Pancreas (tissue), 10 donors: ENCODE measurements at regions of chr2 and their contacts with region 1.

Region 1: GRCh38 chr2:176126929-176127773 is 2.4 kb upstream of the HOXD8 start:
- DNase-seq: peak in 5 of 6 donors; percentile 30 to 82 (median 66)
- ATAC-seq: peak in 3 of 4 donors; percentile 50 to 63 (median 60)
- H3K4me3 ChIP-seq: no peak overlapping the region
- H3K27ac ChIP-seq: no peak overlapping the region
- H3K4me1 ChIP-seq: peaks cover 0 to 10% (median 2%) of the 10 kb centered on the region in 3 donors
- H3K27me3 ChIP-seq: peaks cover 6 to 82% (median 37%) of the 10 kb centered on the region in 4 donors
- CTCF ChIP-seq: peak; percentile 63 to 86 (median 76)

Region 2: GRCh38 chr2:176193048-176193447 is 65.9 kb after region 1 on chr2:
- intact Hi-C with region 1: no loop called
- DNase-seq: no peak
- ATAC-seq: no peak
- H3K4me3 ChIP-seq: no peak overlapping the region
- H3K27ac ChIP-seq: no peak overlapping the region
- H3K4me1 ChIP-seq: peaks cover 3 to 15% (median 7%) of the 10 kb centered on the region in 3 donors
- H3K27me3 ChIP-seq: peaks cover 0 to 29% (median 15%) of the 10 kb centered on the region in 4 donors
- CTCF ChIP-seq: no peak

Region 3: DNA sequence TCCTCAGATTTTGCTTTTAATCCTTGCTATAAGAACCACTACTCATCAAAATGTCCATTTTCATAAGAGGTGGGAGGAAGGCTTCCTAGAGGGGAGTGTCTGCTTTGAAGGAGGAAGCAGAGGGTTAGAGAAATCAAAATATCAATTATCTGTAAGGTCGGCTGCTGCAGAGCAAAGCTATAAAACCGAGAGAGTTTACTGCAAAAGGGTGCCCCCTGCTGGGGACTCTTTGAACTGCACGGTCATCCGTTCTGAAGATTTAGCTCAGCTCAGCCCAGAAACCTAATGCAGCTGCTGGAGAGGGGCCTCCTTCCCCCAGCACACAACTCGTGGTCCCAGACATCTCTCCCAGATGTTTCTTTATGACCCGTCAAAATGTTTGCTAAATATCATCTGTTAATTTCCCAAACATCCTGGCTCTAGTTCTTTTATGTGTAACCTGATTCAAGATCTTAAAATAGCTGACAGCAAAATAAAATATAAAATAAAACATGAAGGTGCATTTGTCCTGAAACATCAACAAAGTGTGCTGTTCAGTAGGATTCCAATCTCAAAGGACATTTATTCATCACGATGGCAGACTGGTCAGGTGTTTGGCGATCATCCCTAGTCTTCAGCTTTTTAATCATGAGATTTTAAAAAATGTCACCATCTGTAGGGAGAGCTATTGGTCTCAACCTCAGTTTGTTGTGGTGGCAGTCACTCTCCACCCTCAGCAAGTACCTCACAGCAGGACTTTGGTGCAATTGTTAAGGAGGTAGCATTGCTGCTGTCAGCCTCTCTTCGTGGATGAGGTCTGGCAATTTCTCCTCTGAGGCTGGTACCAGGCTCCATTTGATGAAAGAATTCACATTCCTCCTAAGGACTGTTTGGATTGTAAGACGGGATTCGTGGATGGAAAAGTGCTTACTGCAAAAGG is 328.0 kb after region 1 on chr2:
- intact Hi-C with region 1: loop called in 1 of 3 experiments (anchors 10 kb)
- DNase-seq: peak; percentile 52 to 97 (median 80)
- ATAC-seq: peak; percentile 24 to 94 (median 86)
- H3K4me3 ChIP-seq: no peak overlapping the region
- H3K27ac ChIP-seq: no peak overlapping the region
- H3K4me1 ChIP-seq: no peaks in the 10 kb centered on the region
- H3K27me3 ChIP-seq: peaks cover 0 to 7% (median 2%) of the 10 kb centered on the region in 4 donors
- CTCF ChIP-seq: peak; percentile 85 to 97 (median 90)

Region 4: DNA sequence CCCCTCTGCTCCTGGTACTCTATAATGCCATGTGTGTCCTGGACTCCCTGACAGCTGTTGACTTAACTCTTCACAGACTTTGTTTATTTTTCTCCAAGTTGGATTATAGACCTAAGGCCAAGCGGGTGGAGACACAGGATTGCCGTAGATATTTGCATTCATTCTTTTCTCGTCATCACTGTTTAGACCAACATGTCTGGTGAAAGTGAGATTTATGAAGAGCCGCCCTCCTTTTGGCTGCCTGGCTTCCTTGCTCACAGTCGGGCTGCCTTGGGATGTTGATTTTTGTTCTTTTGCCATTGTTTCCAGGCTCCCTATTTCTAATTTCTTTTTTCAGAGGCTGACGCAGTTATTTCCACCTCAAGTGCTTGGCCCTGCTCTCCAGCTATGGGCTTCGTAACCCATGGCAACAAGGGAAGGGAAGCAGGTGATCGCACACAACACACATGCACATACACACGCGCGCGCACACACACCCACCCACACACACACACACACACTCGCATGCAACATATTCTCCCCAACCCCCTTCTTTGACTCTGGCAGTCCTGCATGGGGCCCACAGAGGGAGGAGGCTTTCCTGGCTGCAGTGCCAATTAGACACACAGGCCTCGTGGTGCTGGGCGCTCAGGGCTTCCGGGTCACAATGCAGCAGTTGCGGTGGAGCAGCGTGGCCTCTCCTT is 438.6 kb after region 1 on chr2:
- intact Hi-C with region 1: loop called in 1 of 3 experiments (anchors 10 kb)
- DNase-seq: no peak
- ATAC-seq: no peak
- H3K4me3 ChIP-seq: no peak overlapping the region
- H3K27ac ChIP-seq: no peak overlapping the region
- H3K4me1 ChIP-seq: no peaks in the 10 kb centered on the region
- H3K27me3 ChIP-seq: no peaks in the 10 kb centered on the region
- CTCF ChIP-seq: no peak

Region 5: GRCh38 chr2:176638167-176639015 is 511.2 kb after region 1 on chr2:
- intact Hi-C with region 1: loop called in 2 of 3 experiments (anchors 5 to 10 kb)
- DNase-seq: peak; percentile 39 to 86 (median 62)
- ATAC-seq: peak; percentile 95 to 98 (median 98)
- H3K4me3 ChIP-seq: peak overlapping the region; percentile 30 to 55 (median 47)
- H3K27ac ChIP-seq: no peak overlapping the region
- H3K4me1 ChIP-seq: no peaks in the 10 kb centered on the region
- H3K27me3 ChIP-seq: peaks cover 0 to 40% (median 4%) of the 10 kb centered on the region in 4 donors
- CTCF ChIP-seq: peak; percentile 42 to 72 (median 53)

Region 6: DNA sequence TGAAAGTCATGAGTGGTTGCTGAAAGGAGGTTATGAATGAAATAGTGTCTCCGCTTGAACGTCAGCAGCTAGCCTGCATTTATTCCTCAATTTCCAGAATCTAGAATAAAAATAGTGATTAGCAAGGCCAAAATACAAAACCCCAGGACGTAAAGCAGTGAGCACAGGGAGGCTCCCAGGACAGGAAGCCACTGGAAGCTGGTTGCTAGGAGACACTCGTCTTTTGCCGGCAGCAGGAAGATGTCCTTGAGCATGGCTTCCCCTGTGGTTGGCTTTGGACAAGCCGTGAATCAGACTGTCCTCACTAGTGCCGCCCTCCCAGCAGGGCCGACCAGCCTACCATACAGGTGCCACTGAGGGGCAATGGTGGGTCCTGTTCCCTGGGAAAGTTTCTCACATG is 516.5 kb after region 1 on chr2:
- intact Hi-C with region 1: loop called in 2 of 3 experiments (anchors 5 to 10 kb)
- DNase-seq: no peak
- ATAC-seq: no peak
- H3K4me3 ChIP-seq: no peak overlapping the region
- H3K27ac ChIP-seq: no peak overlapping the region
- H3K4me1 ChIP-seq: no peaks in the 10 kb centered on the region
- H3K27me3 ChIP-seq: peaks cover 0 to 30% (median 4%) of the 10 kb centered on the region in 4 donors
- CTCF ChIP-seq: no peak

Region 7: DNA sequence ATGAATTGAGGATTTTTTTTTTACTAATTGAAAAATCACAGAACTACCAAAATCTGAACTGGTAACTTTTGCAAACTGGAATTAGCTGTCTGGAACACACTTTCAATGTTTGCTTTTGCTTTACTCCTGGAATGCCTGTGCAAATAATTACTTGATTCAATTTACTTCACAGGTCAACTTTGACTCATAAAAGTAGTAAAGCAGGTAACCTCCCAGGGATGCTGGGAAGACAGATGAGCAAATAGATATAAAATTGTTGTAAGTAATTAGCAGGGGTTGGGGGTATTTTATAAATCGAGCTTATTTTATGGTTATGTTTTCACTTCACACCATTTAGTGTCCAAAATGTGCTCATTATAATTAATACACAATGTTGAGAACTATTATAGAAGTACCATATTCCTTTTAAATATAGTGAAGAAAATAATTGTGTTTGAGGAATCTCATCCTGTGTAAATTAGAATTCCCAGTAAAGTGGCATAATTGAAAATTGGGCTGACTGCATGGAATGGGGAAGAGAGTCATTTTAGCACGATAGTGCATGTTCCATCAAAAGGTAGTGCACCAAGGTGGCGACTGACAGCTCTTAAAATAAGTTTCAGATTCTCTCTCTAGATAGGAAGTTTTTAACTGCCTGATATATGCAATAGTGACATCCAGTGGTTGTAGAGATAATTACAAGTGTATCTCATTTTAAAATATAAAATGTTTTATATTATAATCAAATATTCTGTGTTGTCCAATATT is 687.3 kb after region 1 on chr2:
- intact Hi-C with region 1: loop called in 1 of 3 experiments (anchors 10 kb)
- DNase-seq: no peak
- ATAC-seq: peak in 3 of 4 donors; percentile 63 to 79 (median 78)
- H3K4me3 ChIP-seq: no peak overlapping the region
- H3K27ac ChIP-seq: no peak overlapping the region
- H3K4me1 ChIP-seq: peaks cover 0 to 7% (median 6%) of the 10 kb centered on the region in 3 donors
- H3K27me3 ChIP-seq: no peaks in the 10 kb centered on the region
- CTCF ChIP-seq: peak; percentile 10 to 55 (median 46)

Region 8: GRCh38 chr2:177148477-177149154 is 1021.5 kb after region 1 on chr2:
- intact Hi-C with region 1: loop called in 1 of 3 experiments (anchors 10 kb)
- DNase-seq: peak; percentile 58 to 85 (median 76)
- ATAC-seq: peak; percentile 94 to 99 (median 98)
- H3K4me3 ChIP-seq: peak overlapping the region in 2 of 4 donors; percentile 12 to 40
- H3K27ac ChIP-seq: no peak overlapping the region
- H3K4me1 ChIP-seq: peaks cover 0 to 8% (median 3%) of the 10 kb centered on the region in 3 donors
- H3K27me3 ChIP-seq: peaks cover 3 to 43% (median 8%) of the 10 kb centered on the region in 4 donors
- CTCF ChIP-seq: peak; percentile 53 to 69 (median 62)